ENCODE measurements at regions of chr10 and their contacts with region 1.

Region 1: DNA sequence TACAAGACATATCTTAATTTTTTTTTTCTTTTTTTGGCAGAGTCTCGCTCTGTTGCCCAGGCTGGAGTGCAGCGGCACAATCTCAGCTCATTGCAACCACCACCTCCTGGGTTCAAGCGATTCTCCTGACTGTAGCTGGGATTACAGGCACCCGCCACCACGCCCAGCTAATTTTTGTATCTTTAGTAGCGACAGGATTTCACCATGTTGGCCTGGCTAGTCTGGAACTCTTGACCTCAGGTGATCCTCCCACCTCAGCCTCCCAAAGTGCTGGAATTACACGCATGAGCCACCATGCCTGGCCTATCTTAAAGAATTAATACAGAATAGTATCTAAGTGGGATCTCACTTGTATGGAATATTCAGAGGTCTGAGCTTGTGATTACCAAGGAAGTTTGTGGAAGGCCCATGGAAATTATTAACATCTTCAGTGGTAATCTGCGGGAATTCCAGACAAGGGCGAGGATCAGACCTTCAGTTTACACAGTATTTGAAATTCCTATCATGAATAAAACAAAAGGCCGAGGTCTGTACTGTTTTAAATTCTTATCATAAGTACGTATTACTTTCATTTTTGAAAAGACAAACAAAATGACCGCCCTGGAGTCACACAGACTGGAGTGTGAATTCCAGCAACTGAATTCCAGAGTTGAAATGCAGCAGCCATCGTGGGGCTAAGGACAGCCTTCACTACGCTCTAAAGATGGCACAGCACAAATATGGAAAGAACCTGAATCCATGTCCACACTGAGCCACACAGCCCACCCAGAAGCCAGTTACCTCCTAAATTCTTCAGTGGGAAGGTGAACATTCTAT is 16.7 kb downstream of the GPRIN2 start:
- DNase-seq: no peak
- ATAC-seq: no peak
- H3K4me3 ChIP-seq: no peak overlapping the region
- H3K4me3 Mint-ChIP-seq: no peak overlapping the region
- H3K27ac ChIP-seq: no peak overlapping the region
- H3K27ac Mint-ChIP-seq: no peak overlapping the region
- H3K4me1 ChIP-seq: peaks cover 8% of the 10 kb centered on the region
- H3K4me1 Mint-ChIP-seq: peaks cover 7 to 11% of the 10 kb centered on the region in 2 donors
- H3K27me3 ChIP-seq: peaks cover 13% of the 10 kb centered on the region
- H3K27me3 Mint-ChIP-seq: peaks cover 21 to 39% of the 10 kb centered on the region in 2 donors
- CTCF ChIP-seq: no peak

Region 2: GRCh38 chr10:46555713-46556514 is 16.1 kb after region 1 on chr10:
- intact Hi-C with region 1: loop called (anchors 2 kb)
- DNase-seq: peak in 1 of 2 donors; percentile 14
- ATAC-seq: peak in 1 of 3 donors; percentile 13
- H3K4me3 ChIP-seq: no peak overlapping the region
- H3K4me3 Mint-ChIP-seq: peak overlapping the region; percentile 57
- H3K27ac ChIP-seq: no peak overlapping the region
- H3K27ac Mint-ChIP-seq: no peak overlapping the region
- H3K4me1 ChIP-seq: peaks cover 5% of the 10 kb centered on the region
- H3K4me1 Mint-ChIP-seq: peaks cover 5 to 17% of the 10 kb centered on the region in 2 donors
- H3K27me3 ChIP-seq: peaks cover 28% of the 10 kb centered on the region
- H3K27me3 Mint-ChIP-seq: peaks cover 0 to 7% of the 10 kb centered on the region in 2 donors
- CTCF ChIP-seq: no peak